ENCODE measurements at regions of chr1 and their contacts with region 1.

Region 1: GRCh38 chr1:153977250-153978240 is at the start of gene JTB:
- DNase-seq: peak; percentile 66 to 91 (median 81)
- ATAC-seq: peak; percentile 94 to 98 (median 96)
- H3K4me3 ChIP-seq: peak within 1 kb of the TSS; percentile 93 to 96
- H3K4me3 Mint-ChIP-seq: peak within 1 kb of the TSS; percentile 92 to 97 (median 97)
- H3K27ac ChIP-seq: peak within 1 kb of the TSS; percentile 74
- H3K27ac Mint-ChIP-seq: peak within 1 kb of the TSS; percentile 96 to 98
- H3K4me1 ChIP-seq: peaks cover 15 to 28% of the 10 kb centered on the region in 2 experiments
- H3K4me1 Mint-ChIP-seq: peaks cover 34 to 41% (median 36%) of the 10 kb centered on the region in 3 donors
- H3K27me3 ChIP-seq: no peaks in the 10 kb centered on the region
- H3K27me3 Mint-ChIP-seq: no peaks in the 10 kb centered on the region
- total RNA-seq, gene JTB: 90.4 to 137 (median 129) TPM

Region 2: DNA sequence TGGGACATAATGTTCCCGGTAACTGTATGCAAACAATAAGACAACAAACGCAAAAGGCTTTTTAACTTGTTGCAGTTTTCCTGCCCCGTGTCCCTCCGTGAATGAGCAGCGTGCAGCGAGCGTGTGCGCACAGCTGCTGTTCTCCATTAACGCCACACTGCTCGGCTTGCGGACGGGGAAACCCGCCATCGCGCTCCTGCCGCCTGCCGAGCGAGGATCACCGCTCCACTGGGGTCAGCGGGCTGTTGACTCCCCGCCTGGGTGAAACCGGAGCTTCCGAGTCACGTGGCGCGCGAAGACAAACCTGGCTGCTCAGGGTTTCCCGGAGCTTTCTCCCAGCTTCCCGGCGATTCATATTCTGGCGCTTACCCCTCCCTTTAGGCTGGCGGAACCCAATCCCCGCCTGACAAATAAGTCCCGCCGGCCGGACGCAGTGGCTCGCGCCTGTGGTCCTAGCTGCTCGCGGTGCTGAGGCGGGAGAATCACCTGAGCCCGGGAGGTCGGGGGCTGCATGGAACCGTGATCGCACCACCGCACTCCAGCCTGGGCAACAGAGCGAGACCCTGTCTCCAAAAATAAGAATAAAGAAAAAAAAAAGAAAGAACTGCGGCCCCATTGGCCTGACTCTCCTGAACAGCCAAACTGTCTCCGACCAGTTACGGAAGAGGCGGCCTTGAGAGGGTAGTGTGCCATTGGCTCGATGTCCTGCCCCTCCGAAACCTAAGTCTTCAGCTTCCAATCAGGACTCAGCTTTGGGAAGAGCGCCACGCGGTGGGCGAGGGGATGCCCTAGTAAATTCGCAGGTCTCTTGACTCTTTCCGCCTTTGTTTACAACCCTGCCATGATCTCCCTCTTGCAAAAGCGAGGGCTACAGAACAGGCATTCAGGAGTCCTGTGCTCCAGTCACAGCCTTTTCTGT is 10.2 kb before region 1 on chr1 and contains the start of gene CREB3L4:
- CTCF ChIA-PET with region 1: interaction called, 3 to 23 read pairs
- POLR2A ChIA-PET with region 1: interaction called, 4 to 8 read pairs
- DNase-seq: peak; percentile 69 to 94 (median 84)
- ATAC-seq: peak; percentile 85 to 87 (median 86)
- H3K4me3 ChIP-seq: peak within 1 kb of the TSS; percentile 78 to 91
- H3K4me3 Mint-ChIP-seq: peak within 1 kb of the TSS; percentile 86 to 95 (median 92)
- H3K27ac ChIP-seq: peak within 1 kb of the TSS; percentile 82
- H3K27ac Mint-ChIP-seq: peak within 1 kb of the TSS; percentile 97 to 98
- H3K4me1 ChIP-seq: peaks cover 20 to 53% of the 10 kb centered on the region in 2 experiments
- H3K4me1 Mint-ChIP-seq: peaks cover 48 to 67% (median 53%) of the 10 kb centered on the region in 3 donors
- H3K27me3 ChIP-seq: no peaks in the 10 kb centered on the region
- H3K27me3 Mint-ChIP-seq: no peaks in the 10 kb centered on the region
- total RNA-seq, gene CREB3L4: 3.3 to 9.0 (median 6.3) TPM

Region 3: DNA sequence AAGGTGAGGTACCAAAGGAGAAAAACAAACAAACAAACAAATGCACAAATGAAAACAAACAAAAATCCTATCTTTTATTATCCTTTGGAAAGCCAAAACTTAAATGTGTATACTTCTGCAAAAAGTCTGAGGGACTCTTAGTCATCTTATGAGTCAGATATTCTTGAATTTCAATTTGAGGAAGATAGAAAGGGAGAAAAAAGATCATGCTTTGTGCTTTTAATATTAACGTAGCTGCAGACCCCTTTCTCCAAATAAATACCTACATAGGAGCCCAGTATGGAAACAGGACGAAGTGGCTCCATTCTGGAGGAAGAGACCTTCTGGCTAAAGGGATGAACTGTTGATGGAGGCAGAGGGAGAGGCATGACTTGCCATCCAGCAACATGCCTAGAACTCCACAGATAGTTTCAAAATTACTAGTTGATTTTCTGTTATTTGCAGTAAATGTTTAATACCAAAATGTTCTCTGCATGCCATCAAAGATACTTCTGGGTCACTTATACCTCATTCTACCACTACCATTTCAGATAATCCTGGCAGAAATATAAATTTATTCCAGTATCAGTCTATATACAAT is 151.9 kb after region 1 on chr1:
- CTCF ChIA-PET with region 1: no interaction called
- POLR2A ChIA-PET with region 1: interaction called in 1 of 2 experiments, 12 read pairs
- DNase-seq: no peak
- ATAC-seq: no peak
- H3K4me3 ChIP-seq: no peak overlapping the region
- H3K4me3 Mint-ChIP-seq: no peak overlapping the region
- H3K27ac ChIP-seq: no peak overlapping the region
- H3K27ac Mint-ChIP-seq: no peak overlapping the region
- H3K4me1 ChIP-seq: no peaks in the 10 kb centered on the region
- H3K4me1 Mint-ChIP-seq: no peaks in the 10 kb centered on the region
- H3K27me3 ChIP-seq: no peaks in the 10 kb centered on the region
- H3K27me3 Mint-ChIP-seq: no peaks in the 10 kb centered on the region